MCF 10A (cell line): ENCODE measurements at regions of chr12 and their contacts with region 1.

Region 1: GRCh38 chr12:94101738-94102660 is 46.4 kb upstream of the PLXNC1 start:
- DNase-seq: peak; percentile 92
- H3K4me3 Mint-ChIP-seq: peak overlapping the region; percentile 75
- H3K27ac Mint-ChIP-seq: no peak overlapping the region
- H3K4me1 Mint-ChIP-seq: peaks cover 46% of the 10 kb centered on the region
- H3K27me3 Mint-ChIP-seq: no peaks in the 10 kb centered on the region
- CTCF ChIP-seq: peak; percentile 80

Region 2: GRCh38 chr12:93497456-93497855 is 604.5 kb before region 1 on chr12:
- CTCF ChIA-PET with region 1: interaction called, 245 read pairs
- POLR2A ChIA-PET with region 1: interaction called, 48 read pairs
- intact Hi-C with region 1: loop called (anchors 2 kb)
- DNase-seq: no peak
- H3K4me3 Mint-ChIP-seq: no peak overlapping the region
- H3K27ac Mint-ChIP-seq: no peak overlapping the region
- H3K4me1 Mint-ChIP-seq: no peaks in the 10 kb centered on the region
- H3K27me3 Mint-ChIP-seq: no peaks in the 10 kb centered on the region
- CTCF ChIP-seq: no peak

Region 3: GRCh38 chr12:93536766-93537488 is 565.1 kb before region 1 on chr12:
- CTCF ChIA-PET with region 1: interaction called, 10 read pairs
- POLR2A ChIA-PET with region 1: no interaction called
- intact Hi-C with region 1: no loop called
- DNase-seq: no peak
- H3K4me3 Mint-ChIP-seq: no peak overlapping the region
- H3K27ac Mint-ChIP-seq: no peak overlapping the region
- H3K4me1 Mint-ChIP-seq: no peaks in the 10 kb centered on the region
- H3K27me3 Mint-ChIP-seq: no peaks in the 10 kb centered on the region
- CTCF ChIP-seq: no peak

Region 4: GRCh38 chr12:93677195-93678064 is 424.6 kb before region 1 on chr12 and contains the start of gene CRADD:
- CTCF ChIA-PET with region 1: interaction called, 7 read pairs
- POLR2A ChIA-PET with region 1: interaction called, 10 read pairs
- intact Hi-C with region 1: loop called (anchors 2 kb)
- DNase-seq: peak; percentile 97
- H3K4me3 Mint-ChIP-seq: peak within 1 kb of the TSS; percentile 98
- H3K27ac Mint-ChIP-seq: peak within 1 kb of the TSS; percentile 100
- H3K4me1 Mint-ChIP-seq: peaks cover 21% of the 10 kb centered on the region
- H3K27me3 Mint-ChIP-seq: no peaks in the 10 kb centered on the region
- CTCF ChIP-seq: no peak
- total RNA-seq, gene CRADD: 15.4 and 17.1 TPM in 2 replicates

Region 5: DNA sequence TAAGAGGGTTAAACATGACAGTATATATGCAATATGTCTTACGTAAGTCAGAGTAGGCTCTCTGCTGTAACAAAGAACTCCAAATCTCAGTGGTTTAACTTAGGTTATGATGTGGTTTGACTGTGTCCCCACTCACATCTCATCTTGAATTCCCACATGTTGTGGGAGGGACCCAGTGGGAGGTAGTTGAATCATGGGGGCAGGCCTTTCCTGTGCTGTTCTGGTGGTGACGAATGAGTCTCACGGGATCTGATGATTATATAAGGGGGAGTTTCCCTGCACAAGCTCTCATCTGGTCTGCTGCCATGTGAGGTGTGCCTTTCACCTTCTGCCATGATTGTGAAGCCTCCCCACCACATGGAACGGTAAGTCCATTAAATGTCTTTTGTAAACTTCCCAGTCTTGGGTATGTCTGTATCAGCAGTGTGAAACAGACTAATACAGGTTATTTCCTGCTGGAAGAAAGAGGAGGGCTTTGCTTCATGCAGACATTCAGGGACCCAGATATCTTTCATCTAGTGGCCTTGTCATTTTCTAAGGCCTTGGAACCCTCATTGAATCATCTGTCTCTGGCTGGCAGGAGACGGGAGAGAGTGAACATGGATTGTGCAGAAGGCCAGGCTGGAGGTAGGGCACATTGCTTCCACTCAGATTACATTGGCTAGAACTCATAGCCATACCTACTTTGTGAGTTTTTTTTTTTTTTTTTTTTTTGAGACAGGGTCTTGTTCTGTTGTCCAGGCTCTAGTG is 328.7 kb before region 1 on chr12:
- CTCF ChIA-PET with region 1: interaction called, 230 read pairs
- POLR2A ChIA-PET with region 1: interaction called, 5 read pairs
- intact Hi-C with region 1: no loop called
- DNase-seq: peak; percentile 57
- H3K4me3 Mint-ChIP-seq: no peak overlapping the region
- H3K27ac Mint-ChIP-seq: no peak overlapping the region
- H3K4me1 Mint-ChIP-seq: peaks cover 31% of the 10 kb centered on the region
- H3K27me3 Mint-ChIP-seq: no peaks in the 10 kb centered on the region
- CTCF ChIP-seq: no peak

Region 6: GRCh38 chr12:93839064-93839463 is 262.9 kb before region 1 on chr12:
- CTCF ChIA-PET with region 1: interaction called, 6 read pairs
- POLR2A ChIA-PET with region 1: interaction called, 3 read pairs
- intact Hi-C with region 1: loop called (anchors 2 kb)
- DNase-seq: peak; percentile 30
- H3K4me3 Mint-ChIP-seq: no peak overlapping the region
- H3K27ac Mint-ChIP-seq: no peak overlapping the region
- H3K4me1 Mint-ChIP-seq: peaks cover 16% of the 10 kb centered on the region
- H3K27me3 Mint-ChIP-seq: no peaks in the 10 kb centered on the region
- CTCF ChIP-seq: peak; percentile 19

Region 7: GRCh38 chr12:94112132-94112531 is 10.1 kb after region 1 on chr12:
- CTCF ChIA-PET with region 1: interaction called, 33 read pairs
- POLR2A ChIA-PET with region 1: interaction called, 3 read pairs
- intact Hi-C with region 1: no loop called
- DNase-seq: no peak
- H3K4me3 Mint-ChIP-seq: no peak overlapping the region
- H3K27ac Mint-ChIP-seq: no peak overlapping the region
- H3K4me1 Mint-ChIP-seq: no peaks in the 10 kb centered on the region
- H3K27me3 Mint-ChIP-seq: no peaks in the 10 kb centered on the region
- CTCF ChIP-seq: no peak